Aorta (tissue), 5 donors: ENCODE measurements at regions of chr4 and their contacts with region 1.

Region 1: GRCh38 chr4:82798168-82799005 is at the start of gene SCD5:
- DNase-seq: peak; percentile 79 to 88
- ATAC-seq: peak; percentile 91
- H3K4me3 ChIP-seq: peak within 1 kb of the TSS; percentile 70 to 75
- H3K27ac ChIP-seq: no peak within 1 kb of the TSS
- H3K4me1 ChIP-seq: peaks cover 0 to 2% of the 10 kb centered on the region in 2 donors
- H3K27me3 ChIP-seq: no peaks in the 10 kb centered on the region
- total RNA-seq, gene SCD5: 6.0 to 11.5 TPM

Region 2: GRCh38 chr4:82578935-82579334 is 219.5 kb before region 1 on chr4:
- intact Hi-C with region 1: no loop called
- DNase-seq: no peak
- ATAC-seq: no peak
- H3K4me3 ChIP-seq: no peak overlapping the region
- H3K27ac ChIP-seq: no peak overlapping the region
- H3K4me1 ChIP-seq: no peaks in the 10 kb centered on the region
- H3K27me3 ChIP-seq: no peaks in the 10 kb centered on the region

Region 3: GRCh38 chr4:82721819-82722423 is 76.5 kb before region 1 on chr4:
- intact Hi-C with region 1: loop called in 1 of 2 experiments (anchors 2 kb)
- DNase-seq: no peak
- ATAC-seq: no peak
- H3K4me3 ChIP-seq: no peak overlapping the region
- H3K27ac ChIP-seq: no peak overlapping the region
- H3K4me1 ChIP-seq: no peaks in the 10 kb centered on the region
- H3K27me3 ChIP-seq: no peaks in the 10 kb centered on the region

Region 4: DNA sequence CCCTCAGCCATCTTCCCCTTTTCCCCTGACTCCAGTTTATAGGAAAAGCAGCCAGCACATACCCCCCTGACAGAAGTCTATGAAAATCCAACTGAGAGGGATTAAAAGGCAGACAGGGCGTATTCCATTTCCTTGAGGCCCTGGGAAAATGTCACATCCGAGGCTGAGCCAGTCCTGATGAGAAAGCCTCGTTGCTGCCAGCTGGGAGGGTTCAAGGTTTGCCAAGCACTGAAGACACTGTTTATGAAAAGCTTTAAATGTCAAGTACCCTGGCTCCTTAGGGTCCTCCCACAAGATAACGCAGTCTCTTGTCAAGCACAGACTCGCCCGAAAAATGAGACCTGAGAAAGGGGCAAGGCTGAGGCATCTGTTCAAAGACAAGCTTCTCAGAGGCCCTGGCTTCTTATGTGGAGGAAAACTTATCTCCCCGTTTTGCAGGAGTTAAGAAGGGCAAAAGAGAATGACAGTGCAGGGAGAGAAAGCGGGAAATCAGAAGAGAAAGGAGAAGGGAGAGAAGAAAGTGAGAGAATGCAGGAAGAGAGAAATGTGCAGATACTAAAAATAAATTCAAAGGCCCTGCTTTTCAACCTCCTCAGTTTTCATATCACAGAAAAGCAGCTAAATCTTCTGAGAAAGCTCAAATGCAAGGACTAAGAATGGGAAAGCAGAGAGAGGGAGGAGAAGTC is 44.5 kb before region 1 on chr4:
- intact Hi-C with region 1: loop called in 1 of 2 experiments (anchors 5 kb)
- DNase-seq: no peak
- ATAC-seq: peak; percentile 39
- H3K4me3 ChIP-seq: no peak overlapping the region
- H3K27ac ChIP-seq: peak overlapping the region in 1 of 2 donors; percentile 47
- H3K4me1 ChIP-seq: no peaks in the 10 kb centered on the region
- H3K27me3 ChIP-seq: no peaks in the 10 kb centered on the region

Region 5: DNA sequence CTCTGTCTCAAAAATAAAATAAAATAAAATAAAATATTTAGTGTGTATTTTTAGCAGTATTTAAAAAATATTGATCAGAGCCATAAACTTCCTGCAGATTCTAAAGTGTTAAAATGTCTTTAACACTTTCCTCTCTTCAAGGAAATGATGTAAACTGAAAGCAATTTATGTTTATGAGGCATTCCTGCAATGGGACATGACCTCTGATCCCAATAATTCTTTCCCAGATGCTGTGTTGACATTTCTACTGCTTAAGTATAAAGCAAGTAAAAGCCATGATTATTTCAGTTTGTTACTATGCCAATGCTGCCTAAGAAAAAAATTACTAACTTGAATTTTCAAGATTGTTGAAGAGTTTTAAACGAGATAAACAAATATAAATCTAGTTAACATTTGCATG is 457.2 kb after region 1 on chr4:
- intact Hi-C with region 1: no loop called
- DNase-seq: no peak
- ATAC-seq: no peak
- H3K4me3 ChIP-seq: no peak overlapping the region
- H3K27ac ChIP-seq: no peak overlapping the region
- H3K4me1 ChIP-seq: no peaks in the 10 kb centered on the region
- H3K27me3 ChIP-seq: no peaks in the 10 kb centered on the region